Activated CD8-positive, alpha-beta T cell treated with anti-CD3 and anti-CD28 coated beads for 36 hours (primary cell): ENCODE measurements at regions of chr5 and their contacts with region 1.

Region 1: DNA sequence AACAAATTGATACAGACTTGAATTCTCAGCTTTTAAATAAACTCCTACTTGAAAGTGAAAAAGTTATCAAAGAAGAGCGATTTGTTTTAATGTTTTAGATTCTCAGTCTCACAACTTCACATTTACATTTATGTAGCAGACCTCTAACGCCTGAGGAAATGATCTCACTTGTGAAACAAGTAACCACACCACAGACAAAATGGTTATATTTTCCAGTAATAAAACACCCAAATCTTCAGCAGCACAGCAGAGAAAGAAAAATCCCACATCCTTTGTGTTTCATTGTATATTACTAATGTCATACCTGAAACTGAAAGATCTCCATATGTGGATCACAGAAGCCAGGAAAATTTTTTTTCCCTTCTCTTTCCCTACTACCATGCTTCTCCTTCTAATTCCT is 29.8 kb upstream of the GZMA start:
- DNase-seq: no peak
- ATAC-seq: peak; percentile 87
- H3K4me3 Mint-ChIP-seq: peak overlapping the region; percentile 42
- H3K27ac Mint-ChIP-seq: peak overlapping the region; percentile 85
- H3K4me1 Mint-ChIP-seq: peaks cover 37% of the 10 kb centered on the region
- H3K27me3 Mint-ChIP-seq: no peaks in the 10 kb centered on the region
- CTCF ChIP-seq: no peak

Region 2: GRCh38 chr5:55102348-55102747 is 29.7 kb after region 1 on chr5 and contains the start of gene GZMA:
- CTCF ChIA-PET with region 1: interaction called, 3 read pairs
- POLR2A ChIA-PET with region 1: no interaction called
- intact Hi-C with region 1: loop called (anchors 2 kb)
- DNase-seq: peak; percentile 36
- ATAC-seq: peak; percentile 64
- H3K4me3 Mint-ChIP-seq: peak within 1 kb of the TSS; percentile 59
- H3K27ac Mint-ChIP-seq: peak within 1 kb of the TSS; percentile 84
- H3K4me1 Mint-ChIP-seq: peaks cover 78% of the 10 kb centered on the region
- H3K27me3 Mint-ChIP-seq: peaks cover 10% of the 10 kb centered on the region
- CTCF ChIP-seq: no peak
- total RNA-seq, gene GZMA: 17.8 to 18.2 TPM

Region 3: DNA sequence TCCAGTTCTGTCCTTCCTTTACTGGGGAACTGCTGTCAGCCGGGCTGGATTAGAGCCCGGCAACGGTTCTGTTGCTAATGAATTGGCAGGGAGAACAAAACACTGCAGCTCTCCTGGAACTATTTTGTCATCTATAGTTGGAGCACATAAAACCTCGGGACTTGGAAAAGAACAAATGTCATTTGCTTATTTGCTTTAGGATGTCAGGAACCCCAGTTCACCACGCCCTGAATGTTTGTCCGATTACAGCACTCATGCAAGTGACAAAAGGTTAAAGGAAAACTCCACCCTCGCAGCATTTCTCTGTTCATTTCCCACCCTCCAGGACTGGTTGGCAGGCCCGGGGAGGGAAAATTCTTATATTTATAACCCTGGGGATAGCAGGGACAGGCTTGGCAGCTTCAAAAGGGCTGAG is 528.5 kb after region 1 on chr5:
- CTCF ChIA-PET with region 1: no interaction called
- POLR2A ChIA-PET with region 1: no interaction called
- intact Hi-C with region 1: no loop called
- DNase-seq: no peak
- ATAC-seq: peak; percentile 19
- H3K4me3 Mint-ChIP-seq: peak overlapping the region; percentile 6
- H3K27ac Mint-ChIP-seq: peak overlapping the region; percentile 47
- H3K4me1 Mint-ChIP-seq: peaks cover 41% of the 10 kb centered on the region
- H3K27me3 Mint-ChIP-seq: no peaks in the 10 kb centered on the region
- CTCF ChIP-seq: no peak